Activated naive CD8-positive, alpha-beta T cell treated with anti-CD3 and anti-CD28 coated beads, Interleukin-2, amount 10 ng/mL, durations not matched to agents 7 days and 5 days (primary cell): ENCODE measurements at regions of chr7 and their contacts with region 1.

Region 1: DNA sequence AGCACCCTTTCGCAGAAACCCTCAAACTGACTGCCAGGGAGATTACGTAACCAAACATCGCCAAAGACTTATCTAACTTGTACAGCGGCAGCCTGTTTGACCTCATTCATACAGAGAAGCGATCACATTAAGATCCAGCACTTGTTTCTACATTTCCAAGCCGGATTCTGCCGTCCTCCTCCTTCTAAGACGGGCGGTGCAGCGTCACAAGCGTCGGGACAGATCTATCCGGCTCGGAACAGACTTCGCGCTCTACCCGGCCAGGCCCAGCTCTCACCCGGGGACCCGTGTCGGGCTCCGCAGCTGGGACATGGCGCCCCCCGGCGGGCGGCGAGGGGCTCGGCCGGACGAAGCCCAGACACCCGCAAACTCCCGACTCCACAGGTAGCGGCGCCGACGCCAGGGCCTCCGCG is 373 bp downstream of the H2AZ2 start:
- DNase-seq: peak; percentile 95
- ATAC-seq: peak; percentile 70
- H3K4me3 Mint-ChIP-seq: peak overlapping the region; percentile 87
- H3K27ac Mint-ChIP-seq: peak overlapping the region; percentile 97
- H3K4me1 Mint-ChIP-seq: peaks cover 37% of the 10 kb centered on the region
- H3K27me3 Mint-ChIP-seq: no peaks in the 10 kb centered on the region

Region 2: GRCh38 chr7:44581879-44582603 is 265.5 kb before region 1 on chr7 and contains the start of gene TMED4:
- POLR2A ChIA-PET with region 1: interaction called, 43 read pairs
- DNase-seq: peak; percentile 100
- ATAC-seq: peak; percentile 93
- H3K4me3 Mint-ChIP-seq: peak within 1 kb of the TSS; percentile 93
- H3K27ac Mint-ChIP-seq: peak within 1 kb of the TSS; percentile 95
- H3K4me1 Mint-ChIP-seq: peaks cover 22% of the 10 kb centered on the region
- H3K27me3 Mint-ChIP-seq: peaks cover 7% of the 10 kb centered on the region
- total RNA-seq, gene TMED4: 91.4 to 94.3 TPM

Region 3: GRCh38 chr7:44784364-44784763 is 63.1 kb before region 1 on chr7:
- POLR2A ChIA-PET with region 1: no interaction called
- DNase-seq: no peak
- ATAC-seq: no peak
- H3K4me3 Mint-ChIP-seq: no peak overlapping the region
- H3K27ac Mint-ChIP-seq: no peak overlapping the region
- H3K4me1 Mint-ChIP-seq: no peaks in the 10 kb centered on the region
- H3K27me3 Mint-ChIP-seq: peaks cover 4% of the 10 kb centered on the region

Region 4: GRCh38 chr7:44797329-44798251 is 49.9 kb before region 1 on chr7:
- POLR2A ChIA-PET with region 1: interaction called, 38 read pairs
- DNase-seq: peak; percentile 83
- ATAC-seq: peak; percentile 49
- H3K4me3 Mint-ChIP-seq: peak overlapping the region; percentile 98
- H3K27ac Mint-ChIP-seq: peak overlapping the region; percentile 96
- H3K4me1 Mint-ChIP-seq: peaks cover 27% of the 10 kb centered on the region
- H3K27me3 Mint-ChIP-seq: no peaks in the 10 kb centered on the region

Region 5: DNA sequence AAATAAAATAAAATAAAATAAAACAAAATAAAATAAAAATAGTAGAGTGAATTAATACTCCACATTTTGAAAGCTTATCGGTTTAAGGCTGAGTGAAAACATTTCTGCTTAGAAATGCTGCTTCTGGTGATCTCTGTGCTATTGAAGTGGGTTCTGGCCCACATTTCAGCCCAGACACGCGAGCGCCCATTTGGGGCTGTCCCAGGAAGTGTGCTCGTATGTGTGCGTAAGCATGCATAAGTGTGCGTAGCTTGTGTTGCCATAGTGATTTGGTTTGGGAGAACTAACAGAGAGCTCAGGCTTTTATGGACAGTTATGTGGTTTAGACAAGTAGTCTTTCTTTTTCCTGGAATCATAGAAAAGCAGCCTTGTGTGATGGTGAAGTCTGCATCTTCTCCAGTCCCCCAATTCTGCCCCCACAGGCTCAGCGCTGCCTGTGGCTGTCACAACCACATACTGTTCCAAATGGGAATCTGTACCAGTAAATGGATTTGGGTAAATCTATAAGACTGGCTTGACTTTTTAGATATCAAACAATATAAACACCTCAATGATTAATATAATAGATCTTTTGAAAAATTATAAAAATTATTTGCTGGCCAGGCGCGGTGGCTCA is 67.6 kb after region 1 on chr7:
- POLR2A ChIA-PET with region 1: interaction called, 28 read pairs
- DNase-seq: peak; percentile 79
- ATAC-seq: peak; percentile 97
- H3K4me3 Mint-ChIP-seq: peak overlapping the region; percentile 75
- H3K27ac Mint-ChIP-seq: peak overlapping the region; percentile 90
- H3K4me1 Mint-ChIP-seq: peaks cover 29% of the 10 kb centered on the region
- H3K27me3 Mint-ChIP-seq: no peaks in the 10 kb centered on the region